BJ (cell line): ENCODE measurements at regions of chr3 and their contacts with region 1.

Region 1: DNA sequence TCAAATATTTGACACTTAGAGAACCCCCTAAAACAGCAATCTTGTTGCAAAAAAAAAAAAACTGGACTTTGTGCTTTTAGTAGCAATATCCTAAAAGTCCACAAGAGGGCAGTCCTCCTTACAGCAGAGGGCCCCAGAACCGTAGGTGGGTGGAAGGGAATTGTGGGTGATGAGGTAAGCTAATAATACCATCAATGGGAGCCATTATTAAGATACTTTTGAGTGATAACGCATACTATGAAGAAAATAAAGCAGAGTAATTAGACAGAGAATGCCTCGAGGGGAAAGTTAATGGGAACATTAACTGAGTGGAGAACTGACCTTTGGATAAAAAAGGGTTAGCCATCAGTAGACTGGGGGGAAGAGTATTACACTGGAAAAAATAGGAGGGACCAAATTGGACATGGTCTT is 229.9 kb downstream of the THRB start:
- DNase-seq: no peak
- H3K4me3 ChIP-seq: no peak overlapping the region
- H3K27me3 ChIP-seq: peaks cover 2% of the 10 kb centered on the region
- CTCF ChIP-seq: peak; percentile 78

Region 2: DNA sequence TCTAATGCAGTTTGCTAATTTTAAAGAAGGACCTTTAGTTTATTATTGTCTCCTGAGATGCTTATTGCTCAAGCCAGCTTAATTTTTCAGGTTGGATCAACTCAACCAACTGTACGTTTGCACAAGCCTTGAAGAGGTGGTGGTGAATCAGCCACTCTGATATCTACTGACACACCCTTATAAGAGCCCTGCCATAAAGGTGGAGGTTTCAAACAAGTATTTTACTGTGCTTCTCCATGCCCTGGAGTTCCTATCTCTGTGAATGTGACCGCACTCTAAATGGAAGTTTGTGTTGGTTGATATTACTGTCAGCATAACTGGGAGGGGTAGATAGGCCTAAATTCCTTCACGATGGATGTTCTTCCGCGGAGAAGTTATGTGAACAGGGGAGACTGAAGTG is 756.3 kb before region 1 on chr3:
- CTCF ChIA-PET with region 1: no interaction called
- POLR2A ChIA-PET with region 1: no interaction called
- DNase-seq: no peak
- H3K4me3 ChIP-seq: no peak overlapping the region
- H3K27me3 ChIP-seq: no peaks in the 10 kb centered on the region
- CTCF ChIP-seq: no peak

Region 3: GRCh38 chr3:24254649-24255048 is 10.1 kb before region 1 on chr3:
- CTCF ChIA-PET with region 1: interaction called, 12 read pairs
- POLR2A ChIA-PET with region 1: no interaction called
- DNase-seq: peak; percentile 85
- H3K4me3 ChIP-seq: no peak overlapping the region
- H3K27me3 ChIP-seq: peaks cover 9% of the 10 kb centered on the region
- CTCF ChIP-seq: no peak

Region 4: GRCh38 chr3:24494618-24495325 is 230.0 kb after region 1 on chr3 and contains the start of gene THRB:
- CTCF ChIA-PET with region 1: interaction called, 14 read pairs
- POLR2A ChIA-PET with region 1: interaction called, 5 read pairs
- DNase-seq: no peak
- H3K4me3 ChIP-seq: peak within 1 kb of the TSS; percentile 55
- H3K27me3 ChIP-seq: peaks cover 11% of the 10 kb centered on the region
- CTCF ChIP-seq: no peak
- polyA plus RNA-seq, gene THRB: 0.72 and 0.83 TPM in 2 replicates

Region 5: DNA sequence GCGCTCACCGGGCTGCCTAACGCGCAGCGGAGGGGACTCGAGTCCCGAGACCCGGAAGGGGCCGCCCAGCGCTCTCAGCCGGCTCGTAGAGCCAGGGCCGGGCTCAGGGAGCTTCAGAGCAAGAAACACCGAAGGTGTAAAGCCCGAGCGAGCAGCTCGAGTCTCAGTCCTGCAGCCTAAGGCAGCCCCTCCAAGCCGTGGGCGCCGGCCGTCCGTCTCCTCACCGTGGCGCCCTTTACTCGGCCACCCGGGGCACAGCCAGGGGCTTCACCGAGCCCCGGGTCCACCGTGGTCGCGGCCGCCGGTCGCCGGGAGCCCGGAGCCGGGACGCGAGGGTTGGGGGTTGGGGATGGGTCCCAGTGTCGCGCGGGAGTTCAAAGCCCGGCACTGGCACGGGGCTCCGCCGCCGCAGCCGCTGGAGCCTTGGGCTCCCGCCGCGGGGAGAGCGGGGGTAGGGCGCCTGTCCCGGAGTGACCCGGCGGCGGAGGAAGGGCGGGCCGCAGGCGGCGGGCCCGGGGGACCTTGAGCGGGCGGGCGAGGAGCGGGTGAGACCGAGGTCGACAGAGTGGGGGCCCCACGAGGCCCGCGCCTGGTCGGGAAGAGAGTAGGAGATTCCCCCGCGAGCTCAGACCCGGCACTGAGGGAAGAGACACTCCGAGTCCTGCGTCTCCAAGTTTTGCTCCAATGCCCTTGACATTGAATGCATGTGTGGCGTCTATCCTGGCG is 256.8 kb after region 1 on chr3:
- CTCF ChIA-PET with region 1: no interaction called
- POLR2A ChIA-PET with region 1: interaction called, 10 read pairs
- DNase-seq: no peak
- H3K4me3 ChIP-seq: peak overlapping the region; percentile 59
- H3K27me3 ChIP-seq: peaks cover 23% of the 10 kb centered on the region
- CTCF ChIP-seq: no peak

Region 6: DNA sequence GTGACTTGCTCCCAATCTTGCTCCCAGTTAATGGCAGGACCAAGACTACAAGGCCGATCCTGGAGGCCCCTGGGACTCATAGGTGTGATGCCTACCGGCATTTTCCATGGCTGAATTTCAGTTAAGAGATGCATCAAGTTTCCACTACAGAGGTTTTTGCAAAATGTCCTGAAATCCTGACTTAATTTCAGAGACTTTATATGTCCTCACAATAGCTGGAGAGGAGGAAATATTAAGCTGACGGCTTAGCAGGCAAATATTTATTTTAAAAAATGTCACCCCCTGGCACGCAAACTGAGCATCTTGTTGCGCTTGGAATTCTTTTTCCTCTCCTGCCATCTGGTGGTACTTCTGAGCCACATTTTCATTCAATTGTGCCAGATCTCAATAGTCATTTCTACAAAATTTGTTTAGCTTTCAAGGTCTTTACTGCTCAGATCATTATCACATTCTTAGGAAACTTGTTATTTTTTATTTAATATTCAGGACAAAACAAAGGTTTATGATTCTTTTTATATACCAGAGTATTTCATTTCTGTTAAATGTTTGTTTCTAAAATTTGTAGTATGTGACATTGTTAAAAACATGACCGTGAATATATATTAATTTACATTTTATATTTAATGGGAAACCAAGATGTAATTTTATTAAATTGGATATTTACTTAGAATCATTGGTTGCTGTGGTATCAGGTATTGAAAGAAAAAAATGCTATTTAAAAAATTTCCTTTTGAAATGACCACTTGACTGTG is 419.1 kb after region 1 on chr3:
- CTCF ChIA-PET with region 1: interaction called, 12 read pairs
- POLR2A ChIA-PET with region 1: no interaction called
- DNase-seq: no peak
- H3K4me3 ChIP-seq: no peak overlapping the region
- H3K27me3 ChIP-seq: no peaks in the 10 kb centered on the region
- CTCF ChIP-seq: peak; percentile 69